Activated CD8-positive, alpha-beta T cell treated with anti-CD3 and anti-CD28 coated beads for 36 hours (primary cell): ENCODE measurements at regions of chr4 and their contacts with region 1.

Region 1: GRCh38 chr4:152535903-152536544 is at the start of gene FBXW7:
- DNase-seq: peak; percentile 99
- ATAC-seq: peak; percentile 88
- H3K4me3 Mint-ChIP-seq: peak within 1 kb of the TSS; percentile 90
- H3K27ac Mint-ChIP-seq: peak within 1 kb of the TSS; percentile 99
- H3K4me1 Mint-ChIP-seq: peaks cover 58% of the 10 kb centered on the region
- H3K27me3 Mint-ChIP-seq: no peaks in the 10 kb centered on the region
- CTCF ChIP-seq: no peak
- total RNA-seq, gene FBXW7: 32.6 to 35.1 TPM

Region 2: DNA sequence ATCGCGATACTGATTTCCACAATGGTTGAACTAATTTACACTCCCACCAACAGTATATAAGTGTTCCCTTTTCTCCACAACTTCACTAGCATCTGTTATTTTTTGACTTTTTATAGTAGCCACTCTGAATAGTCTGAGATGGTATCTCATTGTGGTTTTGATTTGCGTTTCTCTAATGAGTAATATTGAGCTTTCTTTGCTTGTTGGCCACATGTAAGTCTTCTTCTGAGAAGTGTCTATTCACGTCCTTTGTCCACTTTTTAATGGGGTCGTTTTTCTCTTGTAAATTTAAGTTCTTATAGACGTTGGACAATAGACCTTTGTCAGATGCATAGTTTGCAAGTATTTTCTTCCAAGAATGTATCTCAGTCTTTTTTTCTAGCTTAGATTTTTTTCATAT is 10.2 kb before region 1 on chr4:
- CTCF ChIA-PET with region 1: interaction called, 4 read pairs
- POLR2A ChIA-PET with region 1: interaction called, 18 read pairs
- intact Hi-C with region 1: no loop called
- DNase-seq: no peak
- ATAC-seq: peak; percentile 47
- H3K4me3 Mint-ChIP-seq: no peak overlapping the region
- H3K27ac Mint-ChIP-seq: peak overlapping the region; percentile 34
- H3K4me1 Mint-ChIP-seq: peaks cover 68% of the 10 kb centered on the region
- H3K27me3 Mint-ChIP-seq: no peaks in the 10 kb centered on the region
- CTCF ChIP-seq: no peak

Region 3: DNA sequence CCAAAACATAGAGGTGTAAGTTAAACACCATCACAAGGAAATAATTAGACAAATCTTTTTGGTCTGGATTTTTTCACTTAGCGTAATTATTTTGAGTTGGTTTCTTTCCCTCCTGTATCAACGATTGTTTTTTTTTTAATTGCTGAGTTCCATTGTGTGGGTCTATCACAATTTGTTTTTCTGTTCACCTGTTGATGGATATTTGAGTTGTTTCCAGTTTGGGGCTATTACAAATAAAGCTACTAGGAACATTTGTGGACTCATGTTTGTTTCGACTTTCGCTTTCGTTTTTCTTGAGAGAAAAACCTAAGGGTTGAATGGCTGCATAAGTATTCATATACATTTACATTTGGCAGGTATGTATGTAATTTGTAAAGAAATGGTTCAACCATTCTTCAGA is 20.3 kb after region 1 on chr4:
- CTCF ChIA-PET with region 1: interaction called, 9 read pairs
- POLR2A ChIA-PET with region 1: interaction called, 44 read pairs
- intact Hi-C with region 1: loop called (anchors 2 kb)
- DNase-seq: no peak
- ATAC-seq: no peak
- H3K4me3 Mint-ChIP-seq: peak overlapping the region; percentile 31
- H3K27ac Mint-ChIP-seq: peak overlapping the region; percentile 81
- H3K4me1 Mint-ChIP-seq: peaks cover 47% of the 10 kb centered on the region
- H3K27me3 Mint-ChIP-seq: no peaks in the 10 kb centered on the region
- CTCF ChIP-seq: no peak

Region 4: GRCh38 chr4:152860051-152860450 is 324.0 kb after region 1 on chr4:
- CTCF ChIA-PET with region 1: no interaction called
- POLR2A ChIA-PET with region 1: no interaction called
- intact Hi-C with region 1: no loop called
- DNase-seq: no peak
- ATAC-seq: no peak
- H3K4me3 Mint-ChIP-seq: no peak overlapping the region
- H3K27ac Mint-ChIP-seq: no peak overlapping the region
- H3K4me1 Mint-ChIP-seq: no peaks in the 10 kb centered on the region
- H3K27me3 Mint-ChIP-seq: no peaks in the 10 kb centered on the region
- CTCF ChIP-seq: no peak